ENCODE measurements at regions of chr10 and their contacts with region 1.

Region 1: DNA sequence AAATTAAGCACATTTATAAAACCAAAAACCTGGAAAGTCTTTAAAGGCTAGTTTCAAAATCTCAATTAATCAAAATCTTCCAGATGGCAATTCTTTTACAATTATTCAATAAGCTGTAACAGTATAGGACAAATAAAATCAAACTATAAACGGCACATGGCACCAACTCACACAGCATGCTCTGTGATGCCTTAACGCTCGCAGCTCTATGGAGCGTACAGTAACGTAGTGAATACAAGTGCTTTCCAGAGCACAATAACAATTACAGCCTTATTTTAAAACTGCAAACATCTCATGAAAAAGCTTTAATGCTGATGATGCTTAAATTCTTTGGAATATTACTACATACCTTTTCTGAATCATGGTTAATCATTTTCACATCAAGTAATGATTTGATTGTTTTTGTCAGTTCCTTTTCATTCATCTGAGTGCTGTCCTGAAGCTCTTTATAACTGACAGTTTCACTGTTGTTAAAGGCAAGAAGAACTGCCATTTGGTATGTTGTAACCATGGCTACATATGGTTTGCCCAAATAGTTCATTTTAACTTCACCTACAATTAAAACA is 74.2 kb downstream of the CUL2 start:
- DNase-seq: peak; percentile 59
- ATAC-seq: peak; percentile 44
- H3K4me3 ChIP-seq: no peak overlapping the region
- H3K27ac ChIP-seq: peak overlapping the region; percentile 25
- H3K4me1 ChIP-seq: peaks cover 29% of the 10 kb centered on the region
- H3K27me3 ChIP-seq: no peaks in the 10 kb centered on the region
- CTCF ChIP-seq: no peak

Region 2: DNA sequence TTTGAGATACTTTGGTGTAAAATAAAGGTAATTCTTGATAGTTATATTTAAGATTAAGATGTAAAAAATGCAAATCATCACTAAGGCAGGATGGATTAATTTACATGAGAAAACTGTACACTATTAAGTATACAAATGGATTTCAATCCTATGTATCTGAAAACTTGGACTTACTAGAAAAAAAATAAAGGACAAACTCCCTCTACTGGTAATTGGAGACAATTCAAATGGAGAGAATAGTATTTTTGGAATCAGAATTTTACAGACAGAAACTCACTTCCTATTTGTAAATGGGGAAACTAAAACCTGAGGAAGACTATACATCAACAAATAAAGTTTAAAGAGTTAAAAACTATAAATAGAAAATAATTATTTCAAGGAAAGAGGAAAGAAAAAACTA is 11.6 kb after region 1 on chr10:
- CTCF ChIA-PET with region 1: interaction called, 10 read pairs
- POLR2A ChIA-PET with region 1: interaction called, 7 read pairs
- intact Hi-C with region 1: loop called (anchors 1 kb)
- DNase-seq: peak; percentile 88
- ATAC-seq: peak; percentile 8; the same call in 1 of the 2 replicates
- H3K4me3 ChIP-seq: no peak overlapping the region
- H3K27ac ChIP-seq: no peak overlapping the region
- H3K4me1 ChIP-seq: peaks cover 16% of the 10 kb centered on the region
- H3K27me3 ChIP-seq: no peaks in the 10 kb centered on the region
- CTCF ChIP-seq: peak; percentile 96

Region 3: DNA sequence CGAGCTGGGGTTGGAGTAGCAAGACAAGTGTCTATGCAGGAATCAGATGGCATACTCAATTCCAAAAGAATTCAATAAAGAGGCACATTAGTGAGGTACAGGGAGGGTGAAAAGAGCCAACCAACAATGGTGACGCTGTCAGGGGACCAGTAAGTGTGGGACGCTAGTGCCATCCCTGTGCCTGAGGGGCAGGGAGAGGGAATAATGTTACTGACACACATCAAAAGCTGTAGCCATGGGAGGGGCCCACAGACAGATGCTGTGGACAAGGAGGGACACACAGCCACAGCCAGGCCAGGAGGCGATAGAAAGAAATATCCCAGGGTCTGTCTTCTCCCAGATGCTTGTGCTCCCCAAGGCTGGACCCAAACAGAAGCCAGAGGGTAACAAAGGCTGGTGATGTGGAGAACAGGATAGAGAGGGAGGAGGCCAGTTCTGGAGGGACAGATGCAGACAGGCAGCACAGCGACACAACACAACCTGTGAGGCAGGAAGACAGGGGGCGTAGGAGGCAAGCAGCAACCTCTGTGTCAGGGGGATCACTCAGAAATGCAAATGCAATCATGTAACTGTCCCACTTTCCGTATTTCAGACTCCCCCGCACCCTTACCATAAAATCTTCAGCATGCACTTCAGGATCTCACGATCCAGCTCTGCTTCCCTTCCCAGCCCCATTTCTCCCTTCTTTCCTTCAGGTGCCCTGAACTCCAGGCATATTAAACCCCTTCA is 866.7 kb after region 1 on chr10:
- CTCF ChIA-PET with region 1: no interaction called
- POLR2A ChIA-PET with region 1: no interaction called
- intact Hi-C with region 1: no loop called
- DNase-seq: no peak
- ATAC-seq: peak; percentile 56
- H3K4me3 ChIP-seq: no peak overlapping the region
- H3K27ac ChIP-seq: no peak overlapping the region
- H3K4me1 ChIP-seq: no peaks in the 10 kb centered on the region
- H3K27me3 ChIP-seq: no peaks in the 10 kb centered on the region
- CTCF ChIP-seq: peak; percentile 44